Heart right ventricle (tissue), 16 donors: ENCODE measurements at regions of chr17 and their contacts with region 1.

Region 1: DNA sequence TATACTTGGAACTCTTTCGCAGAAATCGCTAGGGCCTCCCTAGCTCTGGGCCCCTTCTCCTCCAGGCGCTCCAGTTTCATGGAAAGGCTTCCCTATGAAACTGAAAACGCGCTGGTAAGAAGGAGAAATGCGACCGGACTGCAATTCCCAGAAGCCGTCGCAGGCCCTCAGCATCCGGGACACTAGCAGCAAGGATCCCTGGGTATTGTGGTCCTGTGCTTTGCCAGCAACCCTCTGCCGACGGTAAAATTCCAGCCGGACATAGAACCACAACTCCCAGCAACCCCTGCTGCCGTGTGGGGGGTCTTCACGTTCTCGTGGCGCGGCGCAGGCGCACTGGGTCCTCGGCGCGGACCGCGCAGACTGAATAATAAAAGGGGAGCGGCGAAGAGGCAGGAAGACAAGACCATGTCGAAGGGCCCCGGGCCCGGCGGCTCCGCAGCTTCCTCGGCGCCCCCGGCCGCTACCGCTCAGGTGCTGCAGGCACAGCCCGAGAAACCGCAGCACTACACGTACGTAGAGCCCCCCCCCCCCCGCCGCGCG is at the start of gene UNK:
- DNase-seq: peak; percentile 94 to 99
- ATAC-seq: peak; percentile 91 to 95 (median 93)
- H3K4me3 ChIP-seq: peak within 1 kb of the TSS; percentile 51 to 78 (median 70)
- H3K27ac ChIP-seq: peak within 1 kb of the TSS; percentile 97 to 100 (median 99)
- H3K4me1 ChIP-seq: peaks cover 7 to 73% (median 39%) of the 10 kb centered on the region in 9 donors
- H3K27me3 ChIP-seq: no peaks in the 10 kb centered on the region
- CTCF ChIP-seq: no peak
- total RNA-seq, gene UNK: 11.6 to 19.1 (median 14.7) TPM

Region 2: GRCh38 chr17:75855310-75856081 is 71.0 kb after region 1 on chr17 and contains the start of gene WBP2:
- intact Hi-C with region 1: loop called in 4 of 10 experiments (anchors 1 to 5 kb)
- DNase-seq: peak; percentile 94 to 99
- ATAC-seq: peak; percentile 90 to 96 (median 93)
- H3K4me3 ChIP-seq: peak within 1 kb of the TSS; percentile 79 to 97 (median 83)
- H3K27ac ChIP-seq: peak within 1 kb of the TSS; percentile 96 to 99 (median 98)
- H3K4me1 ChIP-seq: peaks cover 27 to 76% (median 61%) of the 10 kb centered on the region in 9 donors
- H3K27me3 ChIP-seq: no peaks in the 10 kb centered on the region
- CTCF ChIP-seq: peak; percentile 17 to 77 (median 54)
- total RNA-seq, gene WBP2: 130 to 210 (median 173) TPM